ENCODE measurements at regions of chr4 and their contacts with region 1.

Region 1: DNA sequence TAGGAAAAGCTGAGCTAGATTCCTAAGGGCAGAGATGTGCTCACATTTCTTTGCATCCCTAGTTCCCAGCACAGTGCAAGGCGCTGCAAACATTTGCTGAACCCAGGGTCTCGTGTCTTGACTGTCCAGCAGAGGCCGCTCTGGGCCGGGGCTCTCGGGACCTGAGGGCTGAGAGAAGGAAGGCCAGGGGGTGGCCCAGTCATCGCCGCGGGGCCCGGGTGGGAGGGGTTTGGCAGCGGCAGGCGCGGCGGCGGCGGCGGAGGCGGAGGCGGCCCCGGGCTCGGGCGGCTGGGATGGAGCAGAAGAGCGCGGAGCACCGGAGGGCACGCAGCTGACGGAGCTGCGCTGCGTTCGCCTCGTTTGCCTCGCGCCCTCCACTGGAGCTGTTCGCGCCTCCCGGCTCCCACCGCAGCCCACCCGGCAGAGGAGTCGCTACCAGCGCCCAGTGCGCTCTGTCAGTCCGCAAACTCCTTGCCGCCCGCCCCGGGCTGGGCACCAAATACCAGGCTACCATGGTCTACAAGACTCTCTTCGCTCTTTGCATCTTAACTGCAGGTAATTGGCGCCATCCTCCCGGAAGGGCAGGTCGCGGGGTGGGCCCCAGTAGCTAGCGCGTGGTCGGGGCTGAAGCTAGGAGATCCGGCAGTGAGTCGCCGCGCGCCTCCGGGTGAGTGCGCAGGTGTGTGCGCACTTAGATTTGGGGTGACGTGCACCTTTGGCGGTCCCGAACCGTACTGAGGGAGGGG is at the start of gene PARM1:
- DNase-seq: peak; percentile 78
- ATAC-seq: peak; percentile 72
- H3K4me3 ChIP-seq: peak within 1 kb of the TSS; percentile 82
- H3K27ac ChIP-seq: no peak within 1 kb of the TSS
- H3K4me1 ChIP-seq: no peaks in the 10 kb centered on the region
- H3K27me3 ChIP-seq: peaks cover 10% of the 10 kb centered on the region
- CTCF ChIP-seq: peak; percentile 70
- total RNA-seq, gene PARM1: 2.9 and 4.5 TPM in 2 replicates

Region 2: GRCh38 chr4:74394476-74395136 is 538.4 kb before region 1 on chr4:
- CTCF ChIA-PET with region 1: no interaction called
- POLR2A ChIA-PET with region 1: no interaction called
- intact Hi-C with region 1: no loop called
- DNase-seq: peak; percentile 84
- ATAC-seq: peak; percentile 81
- H3K4me3 ChIP-seq: no peak overlapping the region
- H3K27ac ChIP-seq: peak overlapping the region; percentile 91
- H3K4me1 ChIP-seq: peaks cover 29% of the 10 kb centered on the region
- H3K27me3 ChIP-seq: no peaks in the 10 kb centered on the region
- CTCF ChIP-seq: no peak

Region 3: GRCh38 chr4:74897386-74897785 is 35.6 kb before region 1 on chr4:
- CTCF ChIA-PET with region 1: no interaction called
- POLR2A ChIA-PET with region 1: no interaction called
- intact Hi-C with region 1: no loop called
- DNase-seq: peak; percentile 53
- ATAC-seq: peak; percentile 48
- H3K4me3 ChIP-seq: no peak overlapping the region
- H3K27ac ChIP-seq: peak overlapping the region; percentile 87
- H3K4me1 ChIP-seq: peaks cover 13% of the 10 kb centered on the region; the same call in 1 of the 2 replicates
- H3K27me3 ChIP-seq: no peaks in the 10 kb centered on the region
- CTCF ChIP-seq: no peak

Region 4: DNA sequence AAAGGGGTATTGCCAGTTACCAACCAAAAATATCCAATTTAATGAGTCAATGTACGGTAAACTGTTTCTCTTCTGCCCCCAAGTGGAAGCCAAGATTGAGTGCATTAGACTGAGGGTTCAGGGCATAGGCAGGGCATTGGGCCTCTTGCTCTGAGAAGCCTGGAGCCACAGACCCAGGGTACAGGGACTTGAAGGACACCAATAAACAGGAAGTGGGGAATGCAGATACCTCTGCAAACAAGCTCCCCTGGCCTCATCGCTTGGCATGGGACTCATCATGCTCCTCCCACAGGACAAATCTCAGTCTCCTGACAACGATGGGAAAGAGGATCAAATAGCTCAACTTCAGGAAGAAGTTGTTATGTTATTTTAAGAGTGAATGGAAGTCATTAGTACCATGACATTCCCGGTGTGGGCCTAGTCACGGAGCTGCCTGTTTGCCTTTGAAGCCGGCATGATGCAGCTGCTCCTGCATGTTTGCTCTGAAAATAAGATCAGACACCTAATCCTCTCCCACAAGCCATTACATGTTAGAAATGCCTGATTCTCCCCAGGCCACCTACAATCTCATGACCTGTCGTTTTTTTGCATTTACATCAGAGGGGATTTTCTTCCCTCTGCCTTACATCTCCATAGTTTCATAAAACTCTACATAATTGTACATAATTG is 357.1 kb after region 1 on chr4:
- CTCF ChIA-PET with region 1: no interaction called
- POLR2A ChIA-PET with region 1: no interaction called
- intact Hi-C with region 1: loop called (anchors 5 kb)
- DNase-seq: peak; percentile 52
- ATAC-seq: peak; percentile 35; the same call in 1 of the 2 replicates
- H3K4me3 ChIP-seq: no peak overlapping the region
- H3K27ac ChIP-seq: no peak overlapping the region
- H3K4me1 ChIP-seq: no peaks in the 10 kb centered on the region
- H3K27me3 ChIP-seq: no peaks in the 10 kb centered on the region
- CTCF ChIP-seq: peak; percentile 66

Measured in PC-3 (cell line).